Activated T-helper 1 cell treated with anti-CD3 and anti-CD28 coated beads, Interleukin-12 subunit alpha, Interleukin-12 subunit beta, Interleukin-2, Interleukin-4 antibody, amounts not matched to agents 30 ng/mL and 10 ng/mL and 1 ng/mL, durations not matched to agents 14 hours and 24 hours and 36 hours (primary cell): ENCODE measurements at regions of chr5 and their contacts with region 1.

Region 1: DNA sequence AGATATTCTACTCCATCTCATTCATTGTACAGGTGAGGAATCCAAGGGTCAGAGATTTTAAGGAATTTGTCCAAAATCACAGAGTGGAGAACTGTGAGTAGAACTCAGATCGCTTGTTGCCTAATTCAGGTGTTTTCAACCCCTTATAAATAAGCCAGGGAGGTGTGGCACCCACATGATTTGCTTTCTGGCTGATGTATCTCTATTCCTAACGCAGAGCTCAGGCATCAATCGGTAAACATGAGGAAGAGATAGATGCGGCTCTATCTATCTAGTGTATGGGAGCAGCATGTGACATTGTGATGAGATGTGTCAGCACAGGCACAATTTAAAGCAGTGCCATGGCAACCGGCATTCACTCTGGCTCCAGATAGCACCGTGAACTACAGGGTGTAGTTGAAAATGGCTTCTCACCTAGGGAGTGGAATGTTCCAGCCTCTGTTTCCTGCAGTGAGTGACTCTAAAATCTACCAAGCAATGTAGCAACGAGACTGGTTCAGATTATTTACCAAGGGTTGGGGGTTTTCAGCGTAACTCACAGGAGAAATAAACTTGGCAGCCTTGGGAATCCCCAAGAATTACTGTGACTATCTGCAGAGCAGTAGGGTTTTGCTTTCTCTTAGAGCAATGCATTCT is 53.4 kb upstream of the SUB1 start:
- DNase-seq: peak; percentile 66
- H3K4me3 Mint-ChIP-seq: peak overlapping the region; percentile 91
- H3K27ac Mint-ChIP-seq: peak overlapping the region; percentile 98
- H3K4me1 Mint-ChIP-seq: peaks cover 62% of the 10 kb centered on the region
- H3K27me3 Mint-ChIP-seq: no peaks in the 10 kb centered on the region

Region 2: GRCh38 chr5:32206509-32207354 is 325.3 kb before region 1 on chr5:
- intact Hi-C with region 1: loop called (anchors 5 kb)
- DNase-seq: no peak
- H3K4me3 Mint-ChIP-seq: no peak overlapping the region
- H3K27ac Mint-ChIP-seq: no peak overlapping the region
- H3K4me1 Mint-ChIP-seq: peaks cover 23% of the 10 kb centered on the region
- H3K27me3 Mint-ChIP-seq: peaks cover 2% of the 10 kb centered on the region

Region 3: DNA sequence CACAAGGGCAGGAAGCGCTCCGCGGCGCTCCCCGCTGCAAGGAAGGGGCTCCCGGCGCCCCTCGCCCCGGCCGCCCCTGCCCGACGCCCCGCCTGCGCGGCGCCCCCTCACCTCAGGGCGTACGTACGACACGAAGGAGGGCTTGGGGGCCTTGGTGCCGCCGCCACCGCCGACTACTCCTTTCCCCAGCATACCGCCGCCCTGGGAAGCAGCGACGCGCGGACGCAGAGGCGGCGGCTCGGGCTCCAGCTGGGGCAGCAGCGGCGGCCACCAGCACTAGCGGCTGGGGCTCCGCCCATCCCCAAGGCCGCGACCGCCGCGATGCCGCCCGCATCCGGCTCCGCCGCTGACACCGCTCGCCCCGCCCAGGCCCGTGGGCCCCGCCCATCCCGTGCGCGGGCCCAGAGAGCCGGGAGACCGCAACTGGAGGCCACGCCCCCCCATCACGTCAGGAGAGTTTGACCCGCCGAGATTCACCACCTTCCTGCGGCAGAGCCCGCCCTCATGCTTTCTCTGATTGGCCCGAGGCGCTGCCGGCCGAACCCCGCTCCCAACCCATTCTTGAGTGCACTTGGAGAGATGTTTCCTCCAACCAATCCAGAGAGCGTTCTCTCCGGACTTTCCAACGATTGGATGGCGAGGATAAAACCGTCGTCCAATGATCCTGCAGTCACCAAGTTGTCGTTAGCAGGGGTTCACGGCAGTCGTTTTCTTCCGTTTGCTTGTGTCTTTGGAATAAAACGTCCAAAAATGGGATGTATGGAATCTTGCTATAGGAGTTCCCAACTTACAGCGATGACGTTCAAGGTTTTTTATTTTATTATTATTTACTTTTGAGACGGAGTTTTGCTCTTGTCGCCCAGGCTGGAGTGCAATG is 219.1 kb before region 1 on chr5 and contains the start of gene MTMR12:
- intact Hi-C with region 1: loop called (anchors 5 kb)
- DNase-seq: peak; percentile 100
- H3K4me3 Mint-ChIP-seq: peak within 1 kb of the TSS; percentile 96
- H3K27ac Mint-ChIP-seq: peak within 1 kb of the TSS; percentile 95
- H3K4me1 Mint-ChIP-seq: peaks cover 38% of the 10 kb centered on the region
- H3K27me3 Mint-ChIP-seq: no peaks in the 10 kb centered on the region
- total RNA-seq, gene MTMR12: 26.2 and 29.9 TPM in 2 replicates

Region 4: DNA sequence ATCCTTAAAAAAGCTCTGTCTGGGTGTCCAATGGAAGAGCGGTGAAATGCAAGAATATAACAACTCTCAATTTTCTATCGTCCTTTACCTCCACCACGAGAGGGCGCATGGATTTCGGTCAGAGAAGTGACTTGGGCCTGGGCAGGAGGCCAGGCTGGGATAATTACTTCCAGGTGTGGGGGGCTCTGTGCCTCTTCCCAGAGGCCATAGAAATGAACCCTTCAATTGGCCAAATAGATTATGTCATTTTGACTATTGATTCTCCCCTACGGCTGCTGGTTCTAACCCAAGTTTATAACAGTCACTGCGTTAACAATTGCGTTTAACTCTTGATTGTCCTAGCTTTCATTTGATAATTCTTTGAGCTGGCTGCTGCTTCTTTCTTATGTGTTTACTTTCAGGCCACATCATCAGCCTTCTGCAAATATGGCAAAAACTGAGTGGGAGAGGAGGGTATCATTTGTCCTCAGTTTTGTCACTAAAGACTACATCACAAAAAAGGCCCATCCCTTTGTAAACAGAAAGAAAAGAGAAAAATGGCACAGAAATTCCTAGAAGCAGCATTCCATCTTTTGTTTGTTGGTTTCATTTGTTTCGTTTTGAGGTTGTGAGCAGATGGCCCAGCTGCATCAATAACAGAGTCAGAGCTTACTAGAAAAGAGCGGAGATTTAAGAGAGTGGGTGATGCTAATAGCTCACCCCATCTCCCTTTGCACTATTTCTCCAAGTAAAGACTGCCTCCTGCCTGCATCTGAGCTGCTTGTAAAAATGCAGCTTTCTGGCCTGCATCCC is 42.0 kb before region 1 on chr5:
- intact Hi-C with region 1: loop called (anchors 2 kb)
- DNase-seq: peak; percentile 59
- H3K4me3 Mint-ChIP-seq: no peak overlapping the region
- H3K27ac Mint-ChIP-seq: no peak overlapping the region
- H3K4me1 Mint-ChIP-seq: peaks cover 8% of the 10 kb centered on the region
- H3K27me3 Mint-ChIP-seq: peaks cover 3% of the 10 kb centered on the region

Region 5: DNA sequence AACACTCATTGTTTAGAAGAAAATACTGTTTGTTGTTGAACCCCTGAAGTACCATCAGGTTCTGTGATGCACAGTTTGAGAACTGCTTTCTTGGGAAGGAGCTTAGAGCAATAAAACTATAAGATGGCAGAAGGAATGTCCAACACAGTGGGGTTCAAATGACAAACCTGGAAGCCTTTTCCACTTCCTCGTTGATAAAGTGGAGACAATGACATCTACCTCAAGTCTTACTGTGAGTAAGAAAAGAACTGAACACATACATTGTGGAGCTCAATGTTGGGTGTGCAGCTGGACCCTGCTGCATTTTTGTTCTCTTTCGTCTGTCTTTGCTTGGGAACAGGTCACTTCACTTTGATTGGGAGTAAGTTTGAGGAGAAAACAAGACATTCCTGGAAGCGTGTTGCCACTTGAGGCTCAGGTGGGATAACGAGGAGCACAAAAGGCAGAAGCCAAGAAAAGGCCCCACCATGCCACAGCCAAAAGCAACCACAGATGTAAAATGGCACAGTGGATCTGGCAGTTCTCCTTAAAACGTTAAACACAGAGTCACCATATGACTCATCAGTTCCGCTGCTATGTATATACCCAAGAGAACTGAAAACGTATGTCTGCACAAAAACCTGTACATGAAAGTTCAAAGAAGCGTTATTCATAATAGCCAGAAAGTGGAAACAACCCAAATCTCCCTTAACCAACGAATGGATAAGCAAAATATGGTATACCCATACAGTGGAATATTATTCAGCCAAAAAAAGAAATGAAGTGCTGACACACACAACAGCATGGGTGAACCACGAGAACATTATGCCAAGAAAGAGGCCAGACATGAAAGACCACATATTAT is 10.4 kb after region 1 on chr5:
- intact Hi-C with region 1: loop called (anchors 1 kb)
- DNase-seq: peak; percentile 59
- H3K4me3 Mint-ChIP-seq: peak overlapping the region; percentile 59
- H3K27ac Mint-ChIP-seq: peak overlapping the region; percentile 92
- H3K4me1 Mint-ChIP-seq: peaks cover 68% of the 10 kb centered on the region
- H3K27me3 Mint-ChIP-seq: no peaks in the 10 kb centered on the region

Region 6: GRCh38 chr5:32595118-32595517 is 63.1 kb after region 1 on chr5:
- intact Hi-C with region 1: no loop called
- DNase-seq: no peak
- H3K4me3 Mint-ChIP-seq: peak overlapping the region; percentile 3
- H3K27ac Mint-ChIP-seq: peak overlapping the region; percentile 3
- H3K4me1 Mint-ChIP-seq: peaks cover 72% of the 10 kb centered on the region
- H3K27me3 Mint-ChIP-seq: no peaks in the 10 kb centered on the region

Region 7: GRCh38 chr5:33223563-33224284 is 691.7 kb after region 1 on chr5:
- intact Hi-C with region 1: no loop called
- DNase-seq: no peak
- H3K4me3 Mint-ChIP-seq: no peak overlapping the region
- H3K27ac Mint-ChIP-seq: no peak overlapping the region
- H3K4me1 Mint-ChIP-seq: no peaks in the 10 kb centered on the region
- H3K27me3 Mint-ChIP-seq: no peaks in the 10 kb centered on the region